Endothelial cell of umbilical vein (primary cell): ENCODE measurements at regions of chr1 and their contacts with region 1.

Region 1: GRCh38 chr1:18956369-18957135 is at the start of gene IFFO2:
- DNase-seq: peak; percentile 93
- H3K4me3 ChIP-seq: peak within 1 kb of the TSS; percentile 84 to 89 (median 86)
- H3K27ac ChIP-seq: peak within 1 kb of the TSS; percentile 82
- H3K4me1 ChIP-seq: peaks cover 25% of the 10 kb centered on the region
- H3K27me3 ChIP-seq: peaks cover 4 to 9% of the 10 kb centered on the region in 2 experiments
- CTCF ChIP-seq: no peak
- POLR2A ChIP-seq: peak; percentile 88
- total RNA-seq, gene IFFO2: 31.1 and 35.1 TPM in 2 replicates

Region 2: DNA sequence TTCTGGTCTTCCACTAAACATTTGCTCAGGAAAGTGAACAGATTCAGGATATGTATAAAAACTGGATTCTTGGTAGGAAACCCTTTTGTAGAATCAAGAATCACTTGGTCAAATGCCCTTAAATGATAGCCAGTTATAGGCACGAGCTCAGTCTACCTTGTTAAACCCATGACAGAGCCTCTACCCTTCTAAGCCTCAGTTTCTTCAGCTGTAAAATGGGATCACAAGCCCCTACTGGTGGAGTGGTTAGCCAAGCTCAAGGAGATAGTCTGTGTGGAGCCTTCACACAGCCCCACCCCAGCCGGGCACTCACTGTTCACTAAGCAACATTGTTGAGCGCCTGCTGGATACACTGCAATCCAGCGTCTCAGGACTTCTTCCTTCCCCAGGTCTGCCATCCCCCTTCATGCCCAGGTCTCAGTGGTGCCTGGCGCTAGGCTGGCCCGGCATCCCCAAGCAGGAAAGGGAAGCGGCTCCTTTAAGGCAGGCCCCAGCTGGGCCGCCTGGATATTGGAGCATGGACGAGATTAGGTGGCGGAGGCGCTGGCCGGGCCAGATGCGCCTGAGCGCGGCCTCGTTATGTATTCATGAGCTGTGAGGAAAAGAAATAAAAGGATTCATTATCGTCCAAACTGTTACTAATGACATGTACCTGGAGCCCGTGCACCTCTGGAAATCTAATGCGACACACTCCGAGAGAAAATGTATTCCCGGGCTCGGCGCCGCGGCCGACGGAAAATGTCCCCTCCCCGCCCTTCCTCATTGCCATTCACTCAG is 172.7 kb before region 1 on chr1:
- CTCF ChIA-PET with region 1: no interaction called
- POLR2A ChIA-PET with region 1: no interaction called
- dilution Hi-C with region 1: no loop called
- intact Hi-C with region 1: no loop called
- DNase-seq: no peak
- H3K4me3 ChIP-seq: no peak overlapping the region
- H3K27ac ChIP-seq: no peak overlapping the region
- H3K4me1 ChIP-seq: no peaks in the 10 kb centered on the region
- H3K27me3 ChIP-seq: peaks cover 0 to 11% of the 10 kb centered on the region in 2 experiments
- CTCF ChIP-seq: no peak
- POLR2A ChIP-seq: no peak

Region 3: DNA sequence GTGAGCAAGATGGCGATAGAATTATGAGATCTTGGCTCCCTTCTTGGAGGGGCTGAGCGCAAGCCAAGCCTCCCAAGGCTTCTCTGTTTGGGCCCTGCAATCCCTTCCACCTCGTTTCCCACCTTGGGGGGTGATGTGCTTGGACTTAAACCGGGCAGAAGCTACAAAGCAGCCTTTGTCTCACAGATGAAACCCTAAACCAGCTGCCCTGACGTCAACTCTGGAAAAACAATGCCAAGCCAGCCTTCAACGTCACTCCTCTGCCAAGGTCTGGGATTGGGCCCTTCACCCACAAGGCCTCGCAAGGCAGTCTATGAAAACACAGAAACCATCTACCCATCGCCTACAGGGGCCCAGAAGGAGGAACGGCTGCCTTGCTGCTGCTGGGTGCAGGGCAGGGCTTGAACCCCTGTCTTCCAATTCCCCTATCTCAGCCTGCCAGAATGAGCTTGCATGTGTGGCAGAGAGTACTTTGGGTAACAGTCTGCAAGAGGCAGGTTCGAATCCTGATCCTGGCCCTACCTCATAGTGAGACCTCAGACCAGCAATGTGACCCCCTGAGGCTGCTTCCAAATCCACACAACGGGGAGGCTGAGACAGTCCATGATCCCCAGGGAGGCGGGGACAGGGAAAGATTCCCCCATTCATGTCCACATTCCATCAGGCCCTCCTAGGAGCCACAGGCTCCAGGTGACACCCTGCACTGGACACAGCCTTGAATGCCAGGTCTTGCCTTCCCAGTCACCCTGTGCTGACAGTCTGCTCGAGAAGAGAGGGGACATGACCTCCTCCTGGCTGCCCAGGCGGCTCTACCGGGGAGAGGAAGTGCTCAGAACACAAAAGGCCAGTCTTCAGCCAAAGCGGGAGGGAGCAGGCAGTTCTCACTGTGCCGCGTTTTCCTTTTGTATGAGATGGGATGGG is 15.1 kb before region 1 on chr1:
- CTCF ChIA-PET with region 1: interaction called, 20 read pairs
- POLR2A ChIA-PET with region 1: no interaction called
- dilution Hi-C with region 1: no loop called
- intact Hi-C with region 1: loop called (anchors 1 kb)
- DNase-seq: peak; percentile 63
- H3K4me3 ChIP-seq: no peak overlapping the region
- H3K27ac ChIP-seq: peak overlapping the region; percentile 60
- H3K4me1 ChIP-seq: peaks cover 28% of the 10 kb centered on the region
- H3K27me3 ChIP-seq: no peaks in the 10 kb centered on the region
- CTCF ChIP-seq: no peak
- POLR2A ChIP-seq: no peak

Region 4: DNA sequence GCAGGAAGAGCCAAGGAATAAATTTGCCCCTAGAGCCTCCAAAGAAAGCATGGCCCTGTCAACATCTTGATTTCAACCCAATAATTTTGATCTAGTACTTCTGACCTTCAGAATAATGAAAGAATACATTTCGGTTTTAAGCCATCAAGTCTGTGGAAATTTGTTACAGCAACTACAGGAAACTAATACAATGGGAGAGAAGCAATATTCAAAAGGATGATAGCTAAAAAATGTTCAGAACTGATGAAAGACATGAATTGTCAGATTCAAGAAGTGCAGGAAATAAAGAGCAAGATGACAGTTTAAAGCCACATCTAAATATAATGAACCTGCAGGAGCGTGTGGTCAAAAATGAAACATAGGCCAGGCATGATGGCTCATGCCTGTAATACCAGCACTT is 24.7 kb after region 1 on chr1:
- CTCF ChIA-PET with region 1: no interaction called
- POLR2A ChIA-PET with region 1: no interaction called
- dilution Hi-C with region 1: no loop called
- intact Hi-C with region 1: no loop called
- DNase-seq: no peak
- H3K4me3 ChIP-seq: no peak overlapping the region
- H3K27ac ChIP-seq: no peak overlapping the region
- H3K4me1 ChIP-seq: no peaks in the 10 kb centered on the region
- H3K27me3 ChIP-seq: peaks cover 18 to 39% of the 10 kb centered on the region in 2 experiments
- CTCF ChIP-seq: no peak
- POLR2A ChIP-seq: no peak

Region 5: GRCh38 chr1:19010995-19011844 is 54.7 kb after region 1 on chr1:
- CTCF ChIA-PET with region 1: interaction called, 3 read pairs
- POLR2A ChIA-PET with region 1: no interaction called
- dilution Hi-C with region 1: no loop called
- intact Hi-C with region 1: loop called (anchors 1 kb)
- DNase-seq: peak; percentile 89
- H3K4me3 ChIP-seq: no peak overlapping the region
- H3K27ac ChIP-seq: peak overlapping the region; percentile 84
- H3K4me1 ChIP-seq: peaks cover 31% of the 10 kb centered on the region
- H3K27me3 ChIP-seq: no peaks in the 10 kb centered on the region
- CTCF ChIP-seq: no peak
- POLR2A ChIP-seq: no peak

Region 6: DNA sequence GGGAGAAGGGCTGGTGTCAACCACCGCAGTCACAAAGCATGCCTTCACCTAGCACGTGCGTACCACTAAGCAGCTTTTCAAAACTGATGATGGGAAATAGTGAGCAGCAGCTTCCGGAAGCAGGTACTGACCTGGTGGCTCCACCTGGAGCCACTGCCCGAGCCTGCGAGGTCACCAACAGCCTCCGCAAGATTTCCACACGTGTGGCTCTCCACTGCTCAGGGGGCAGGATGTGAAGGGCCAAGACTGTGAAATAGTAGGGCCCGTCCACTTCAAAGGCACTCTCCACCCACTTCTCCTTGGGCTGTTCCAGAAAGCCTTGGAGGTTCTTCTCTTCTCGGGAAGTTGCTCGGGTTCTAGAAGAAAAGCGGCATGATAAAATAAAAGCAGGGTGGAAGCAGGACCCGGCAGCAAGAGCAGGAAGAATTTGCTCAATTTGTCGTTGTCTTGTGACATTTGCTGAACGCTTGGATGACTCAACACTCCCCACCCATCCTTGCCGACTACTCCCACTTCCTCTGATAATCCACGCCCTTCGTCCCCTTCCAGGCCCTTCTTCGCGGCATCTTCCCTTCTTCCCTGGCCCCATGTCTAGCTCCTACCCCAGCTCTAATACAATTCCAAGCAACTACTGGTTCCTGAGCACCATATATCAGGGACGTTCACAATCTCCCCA is 124.8 kb after region 1 on chr1:
- CTCF ChIA-PET with region 1: no interaction called
- POLR2A ChIA-PET with region 1: no interaction called
- dilution Hi-C with region 1: no loop called
- intact Hi-C with region 1: loop called (anchors 1 kb)
- DNase-seq: peak; percentile 52
- H3K4me3 ChIP-seq: no peak overlapping the region
- H3K27ac ChIP-seq: peak overlapping the region; percentile 84
- H3K4me1 ChIP-seq: peaks cover 42% of the 10 kb centered on the region
- H3K27me3 ChIP-seq: no peaks in the 10 kb centered on the region
- CTCF ChIP-seq: no peak
- POLR2A ChIP-seq: no peak